H1 (cell line): ENCODE measurements at regions of chr14 and their contacts with region 1.

Region 1: DNA sequence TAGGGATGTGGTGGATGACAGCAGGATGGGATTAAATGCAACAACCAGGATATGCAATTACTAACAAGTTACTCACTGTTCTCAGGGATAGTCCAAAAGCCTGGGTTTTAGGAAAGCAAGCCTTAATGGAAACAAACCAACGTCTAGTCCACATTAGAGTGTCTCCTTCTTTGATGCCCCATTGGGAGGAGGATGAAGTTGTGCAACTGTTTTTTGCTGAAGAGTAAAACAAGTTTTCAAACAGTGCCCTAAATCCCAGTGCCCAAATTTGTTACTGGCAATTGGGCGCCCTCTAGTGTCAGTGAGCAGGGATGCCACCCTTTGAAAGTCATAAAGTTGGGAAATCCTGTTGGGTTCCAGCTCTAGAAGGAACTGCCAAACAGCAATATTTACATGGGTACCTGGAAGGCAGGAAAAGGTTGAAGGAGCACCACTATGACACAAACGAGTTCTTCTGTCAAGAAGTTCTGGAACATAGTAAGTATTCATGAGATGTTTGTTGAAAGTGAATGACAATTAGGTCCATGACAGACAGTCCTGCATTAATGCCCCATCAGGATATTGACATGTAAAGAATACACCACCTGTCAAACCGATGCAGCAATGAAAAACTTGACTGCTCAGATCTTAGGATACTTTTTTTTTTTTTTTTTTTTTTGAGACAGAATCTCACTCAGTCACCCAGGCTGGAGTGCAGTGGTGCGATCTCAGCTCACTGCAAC is 11.1 kb upstream of the DPF3 start:
- DNase-seq: peak in 1 of 2 experiments; percentile 71
- H3K4me3 ChIP-seq: no peak overlapping the region
- H3K27ac ChIP-seq: no peak overlapping the region
- H3K4me1 ChIP-seq: peaks cover 0 to 11% (median 0%) of the 10 kb centered on the region in 4 experiments; a peak in 3 of 7 replicates
- H3K27me3 ChIP-seq: no peaks in the 10 kb centered on the region
- CTCF ChIP-seq: peak; percentile 63 to 93 (median 93)
- EP300 ChIP-seq: no peak
- POLR2A ChIP-seq: no peak
- RAD21 ChIP-seq: peak; percentile 98 to 99

Region 2: DNA sequence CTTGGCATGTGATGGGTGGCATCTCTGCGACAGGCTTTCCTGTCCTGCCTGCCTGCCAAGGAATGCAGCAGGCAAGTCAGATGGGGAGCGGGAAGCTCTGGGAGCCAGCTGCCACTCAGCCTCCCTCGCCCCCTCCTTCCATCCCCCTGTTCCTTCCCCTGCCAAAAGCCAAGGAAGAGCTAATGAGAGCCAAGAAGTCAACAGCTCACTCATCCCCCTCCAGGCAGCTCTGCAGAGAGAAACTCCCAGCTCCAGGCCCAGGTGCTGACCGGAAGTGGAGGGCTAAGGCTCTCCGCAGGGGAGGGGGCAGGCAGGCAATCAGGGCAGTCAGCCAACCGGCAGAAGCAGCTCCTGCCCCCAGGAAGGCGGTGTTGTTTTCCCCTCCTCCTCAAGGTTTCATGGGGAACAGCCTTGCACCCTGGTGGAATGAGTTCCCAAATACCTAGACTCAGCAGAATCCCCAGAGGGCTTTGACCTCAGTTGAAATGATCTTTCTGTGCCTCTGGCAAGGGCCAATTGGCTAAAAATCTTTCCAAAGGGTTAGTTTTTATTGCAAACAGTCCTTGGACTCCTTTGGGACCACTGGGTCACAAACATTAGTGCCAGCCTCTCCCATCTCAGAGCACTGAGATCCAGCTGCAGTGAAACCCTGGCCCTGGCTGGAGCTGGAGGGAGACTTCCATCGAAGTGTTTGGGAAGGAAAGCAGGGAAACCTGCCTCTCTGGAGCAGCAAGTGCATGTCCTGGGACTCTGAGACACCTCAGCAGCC is 360.2 kb before region 1 on chr14:
- CTCF ChIA-PET with region 1: interaction called, 14 read pairs
- POLR2A ChIA-PET with region 1: no interaction called
- DNase-seq: peak; percentile 9 to 59
- H3K4me3 ChIP-seq: no peak overlapping the region
- H3K27ac ChIP-seq: no peak overlapping the region
- H3K4me1 ChIP-seq: peaks cover 3 to 10% (median 8%) of the 10 kb centered on the region in 4 experiments
- H3K27me3 ChIP-seq: no peaks in the 10 kb centered on the region; a peak in 1 of 7 replicates
- CTCF ChIP-seq: no peak
- EP300 ChIP-seq: no peak
- POLR2A ChIP-seq: peak in 1 of 2 experiments; percentile 39; a peak in 1 of 3 replicates
- RAD21 ChIP-seq: peak in 1 of 2 experiments; percentile 19; a peak in 2 of 4 replicates

Region 3: GRCh38 chr14:72717220-72717619 is 187.8 kb before region 1 on chr14:
- CTCF ChIA-PET with region 1: interaction called, 19 read pairs
- POLR2A ChIA-PET with region 1: no interaction called
- DNase-seq: no peak
- H3K4me3 ChIP-seq: no peak overlapping the region
- H3K27ac ChIP-seq: no peak overlapping the region
- H3K4me1 ChIP-seq: no peaks in the 10 kb centered on the region
- H3K27me3 ChIP-seq: no peaks in the 10 kb centered on the region
- CTCF ChIP-seq: no peak
- EP300 ChIP-seq: no peak
- POLR2A ChIP-seq: no peak
- RAD21 ChIP-seq: no peak

Region 4: GRCh38 chr14:72758420-72758819 is 146.6 kb before region 1 on chr14:
- CTCF ChIA-PET with region 1: interaction called, 33 read pairs
- POLR2A ChIA-PET with region 1: no interaction called
- DNase-seq: no peak
- H3K4me3 ChIP-seq: no peak overlapping the region
- H3K27ac ChIP-seq: no peak overlapping the region
- H3K4me1 ChIP-seq: no peaks in the 10 kb centered on the region
- H3K27me3 ChIP-seq: no peaks in the 10 kb centered on the region; a peak in 1 of 7 replicates
- CTCF ChIP-seq: peak in 2 of 3 experiments; percentile 50 to 57; a peak in 3 of 4 replicates
- EP300 ChIP-seq: no peak
- POLR2A ChIP-seq: no peak
- RAD21 ChIP-seq: peak; percentile 69 to 86

Region 5: DNA sequence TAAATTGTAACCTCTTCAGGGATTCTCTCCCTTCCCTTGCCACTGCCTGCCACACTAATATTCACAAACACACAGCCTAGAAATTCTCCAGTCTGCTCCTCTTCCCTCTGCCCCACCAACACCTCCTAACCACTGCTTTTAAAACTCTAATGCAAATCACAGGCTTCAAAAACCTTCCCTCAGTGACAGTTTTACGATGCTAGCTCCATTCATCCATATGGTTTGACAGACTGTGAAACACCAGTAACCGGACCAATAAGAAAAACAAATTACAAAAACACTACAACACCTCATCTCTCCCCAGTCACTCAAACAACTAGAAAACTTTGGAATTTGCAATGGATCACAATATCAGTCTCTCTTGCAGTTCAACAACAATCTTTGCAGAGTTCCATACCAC is 16.8 kb before region 1 on chr14:
- CTCF ChIA-PET with region 1: interaction called, 10 read pairs
- POLR2A ChIA-PET with region 1: interaction called, 4 read pairs
- DNase-seq: no peak
- H3K4me3 ChIP-seq: no peak overlapping the region
- H3K27ac ChIP-seq: no peak overlapping the region
- H3K4me1 ChIP-seq: peaks cover 14 to 30% (median 17%) of the 10 kb centered on the region in 4 experiments
- H3K27me3 ChIP-seq: peaks cover 17 to 28% (median 26%) of the 10 kb centered on the region in 4 experiments
- CTCF ChIP-seq: no peak
- EP300 ChIP-seq: no peak
- POLR2A ChIP-seq: no peak
- RAD21 ChIP-seq: no peak

Region 6: DNA sequence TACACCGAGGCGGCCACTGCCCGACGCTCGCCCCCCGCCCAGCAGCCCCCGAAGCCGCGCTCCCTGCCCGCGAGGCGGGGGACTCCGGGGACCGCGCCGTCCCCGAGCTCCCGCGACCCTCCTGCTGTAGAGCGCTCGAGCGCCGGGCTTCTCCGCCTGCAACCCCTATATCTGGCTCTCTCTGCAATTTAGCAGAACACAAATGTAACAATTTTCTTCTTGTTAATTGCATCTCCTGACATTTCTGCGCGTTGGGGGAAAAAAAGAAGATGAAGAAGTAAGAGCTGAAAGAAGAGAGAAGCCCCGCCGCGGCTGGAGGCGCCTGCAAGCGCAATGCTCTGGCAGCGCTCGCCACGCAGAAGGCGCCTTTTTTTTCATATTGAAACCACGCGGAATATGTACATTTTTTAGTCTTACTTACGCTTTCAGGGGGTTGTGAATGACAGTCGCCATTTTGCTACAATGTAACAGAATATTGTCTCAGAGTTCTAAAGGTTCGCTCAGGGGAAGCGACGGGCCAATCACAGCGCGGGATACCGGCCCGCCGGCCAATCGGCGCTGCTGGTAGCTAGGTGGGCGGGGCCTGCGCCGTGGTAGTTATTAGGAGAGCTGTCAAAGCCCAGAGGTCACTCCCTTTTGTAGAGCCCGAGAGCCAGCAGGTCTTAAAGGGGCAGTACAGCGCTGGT is 11.2 kb before region 1 on chr14 and contains the start of gene DPF3:
- CTCF ChIA-PET with region 1: interaction called, 10 read pairs
- POLR2A ChIA-PET with region 1: no interaction called
- DNase-seq: peak; percentile 80 to 96
- H3K4me3 ChIP-seq: peak within 1 kb of the TSS; percentile 58 to 83 (median 68)
- H3K27ac ChIP-seq: no peak within 1 kb of the TSS
- H3K4me1 ChIP-seq: peaks cover 12 to 24% (median 14%) of the 10 kb centered on the region in 4 experiments
- H3K27me3 ChIP-seq: peaks cover 20 to 59% (median 52%) of the 10 kb centered on the region in 4 experiments
- CTCF ChIP-seq: no peak
- EP300 ChIP-seq: no peak
- POLR2A ChIP-seq: no peak
- RAD21 ChIP-seq: no peak
- total RNA-seq, gene DPF3: 0.08 and 0.19 TPM in 2 replicates

Region 7: DNA sequence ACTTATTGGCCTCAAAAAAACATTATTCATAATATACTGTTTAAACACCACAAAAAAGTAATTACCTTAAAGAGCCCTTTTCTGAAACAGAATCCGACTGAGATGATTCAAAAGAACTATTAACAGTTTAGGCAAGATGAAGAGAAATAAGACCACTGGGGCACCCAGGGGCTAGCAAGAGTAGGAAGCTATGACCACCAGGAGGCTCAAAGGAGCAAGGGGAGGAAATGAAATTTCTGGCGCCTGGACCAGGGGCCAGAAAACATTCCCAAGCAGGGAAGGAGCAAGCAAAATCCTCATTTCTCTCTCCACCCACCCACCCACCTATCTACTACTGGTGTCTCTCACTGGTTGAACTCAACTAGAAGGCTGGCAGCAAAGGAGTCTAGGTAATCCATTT is 15.0 kb after region 1 on chr14:
- CTCF ChIA-PET with region 1: interaction called, 13 read pairs
- POLR2A ChIA-PET with region 1: no interaction called
- DNase-seq: no peak
- H3K4me3 ChIP-seq: no peak overlapping the region
- H3K27ac ChIP-seq: no peak overlapping the region
- H3K4me1 ChIP-seq: no peaks in the 10 kb centered on the region
- H3K27me3 ChIP-seq: peaks cover 0 to 3% (median under 1%) of the 10 kb centered on the region in 4 experiments; a peak in 2 of 7 replicates
- CTCF ChIP-seq: peak; percentile 43 to 64 (median 54)
- EP300 ChIP-seq: no peak
- POLR2A ChIP-seq: no peak
- RAD21 ChIP-seq: peak; percentile 27 to 63; a peak in 3 of 4 replicates